PC-3 (cell line): ENCODE measurements at regions of chr2 and their contacts with region 1.

Region 1: GRCh38 chr2:50401772-50402653 is 629.9 kb downstream of the NRXN1 start:
- DNase-seq: peak; percentile 75
- ATAC-seq: no peak
- H3K4me3 ChIP-seq: no peak overlapping the region
- H3K27ac ChIP-seq: no peak overlapping the region
- H3K4me1 ChIP-seq: no peaks in the 10 kb centered on the region
- H3K27me3 ChIP-seq: no peaks in the 10 kb centered on the region
- CTCF ChIP-seq: peak; percentile 93

Region 2: DNA sequence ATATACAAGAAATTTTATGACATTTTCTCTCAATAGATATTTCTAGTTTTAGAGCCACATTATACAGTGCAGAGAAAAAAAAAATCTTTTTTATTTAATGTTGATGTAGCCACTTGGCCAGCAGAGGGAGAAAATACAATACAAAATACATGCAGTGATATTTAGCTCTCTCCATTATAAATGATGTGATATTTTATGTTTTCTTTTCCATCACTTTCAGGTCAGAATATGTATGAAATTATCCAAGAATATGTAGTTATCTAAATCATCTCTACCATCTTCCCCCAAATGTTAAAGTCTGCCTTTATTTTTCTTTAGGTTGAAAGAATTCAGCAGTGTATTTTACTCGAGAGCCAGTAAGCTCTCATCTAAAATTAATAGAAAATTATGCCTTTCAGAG is 714.1 kb before region 1 on chr2:
- CTCF ChIA-PET with region 1: interaction called, 5 read pairs
- POLR2A ChIA-PET with region 1: no interaction called
- intact Hi-C with region 1: loop called (anchors 5 kb)
- DNase-seq: peak; percentile 9
- ATAC-seq: no peak
- H3K4me3 ChIP-seq: no peak overlapping the region
- H3K27ac ChIP-seq: no peak overlapping the region
- H3K4me1 ChIP-seq: no peaks in the 10 kb centered on the region
- H3K27me3 ChIP-seq: no peaks in the 10 kb centered on the region
- CTCF ChIP-seq: peak; percentile 57